Activated CD4-positive, alpha-beta T cell treated with anti-CD3 and anti-CD28 coated beads for 36 hours (primary cell): ENCODE measurements at regions of chr4 and their contacts with region 1.

Region 1: GRCh38 chr4:3880615-3881120 is 114.5 kb downstream of the ADRA2C start:
- DNase-seq: peak; percentile 87
- ATAC-seq: peak; percentile 85
- H3K4me3 Mint-ChIP-seq: no peak overlapping the region
- H3K27ac Mint-ChIP-seq: no peak overlapping the region
- H3K4me1 Mint-ChIP-seq: peaks cover 11% of the 10 kb centered on the region
- H3K27me3 Mint-ChIP-seq: peaks cover 29% of the 10 kb centered on the region

Region 2: GRCh38 chr4:3708103-3708510 is 172.6 kb before region 1 on chr4:
- CTCF ChIA-PET with region 1: no interaction called
- POLR2A ChIA-PET with region 1: no interaction called
- intact Hi-C with region 1: no loop called
- DNase-seq: no peak
- ATAC-seq: no peak
- H3K4me3 Mint-ChIP-seq: no peak overlapping the region
- H3K27ac Mint-ChIP-seq: no peak overlapping the region
- H3K4me1 Mint-ChIP-seq: no peaks in the 10 kb centered on the region
- H3K27me3 Mint-ChIP-seq: peaks cover 5% of the 10 kb centered on the region

Region 3: GRCh38 chr4:3747581-3747904 is 133.1 kb before region 1 on chr4:
- CTCF ChIA-PET with region 1: interaction called, 3 read pairs
- POLR2A ChIA-PET with region 1: no interaction called
- intact Hi-C with region 1: loop called in 1 of 2 experiments (anchors 1 kb)
- DNase-seq: peak; percentile 43
- ATAC-seq: no peak
- H3K4me3 Mint-ChIP-seq: no peak overlapping the region
- H3K27ac Mint-ChIP-seq: no peak overlapping the region
- H3K4me1 Mint-ChIP-seq: no peaks in the 10 kb centered on the region
- H3K27me3 Mint-ChIP-seq: peaks cover 40% of the 10 kb centered on the region

Region 4: DNA sequence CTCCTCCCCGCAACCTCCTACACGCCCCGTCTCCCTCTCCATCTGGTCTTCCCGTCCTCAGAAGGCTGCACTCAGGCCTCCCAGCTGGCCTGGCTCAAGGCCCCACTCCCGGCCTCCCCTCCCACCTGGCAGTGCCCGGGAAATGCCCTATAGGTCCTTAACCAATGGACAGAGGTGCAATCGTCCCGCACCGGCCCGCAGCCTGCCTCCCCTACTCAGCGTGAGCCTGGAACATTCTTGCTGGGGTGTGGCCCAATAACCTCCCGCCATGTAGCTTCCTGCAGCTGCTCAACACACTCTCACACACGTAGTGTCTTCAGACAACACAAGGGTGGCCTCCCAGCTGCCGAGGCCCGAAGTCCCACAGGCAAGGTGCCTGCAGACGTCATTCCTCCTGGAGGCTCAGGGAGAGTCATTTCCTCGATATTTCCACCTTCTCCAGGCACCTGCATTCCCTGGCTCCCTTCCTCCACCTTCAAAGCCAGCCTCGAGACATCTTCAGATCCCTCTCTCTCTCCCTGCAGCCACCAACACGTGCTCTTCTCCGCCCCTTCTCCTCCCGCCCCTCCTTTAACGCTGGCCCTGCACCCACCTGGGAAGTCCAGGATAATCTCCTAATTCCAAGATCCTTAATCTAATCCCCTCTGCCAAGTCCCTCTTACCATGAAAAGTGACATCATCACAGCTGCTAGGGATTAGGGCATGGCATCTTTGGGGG is 58.3 kb before region 1 on chr4:
- CTCF ChIA-PET with region 1: no interaction called
- POLR2A ChIA-PET with region 1: no interaction called
- intact Hi-C with region 1: no loop called
- DNase-seq: no peak
- ATAC-seq: no peak
- H3K4me3 Mint-ChIP-seq: no peak overlapping the region
- H3K27ac Mint-ChIP-seq: no peak overlapping the region
- H3K4me1 Mint-ChIP-seq: no peaks in the 10 kb centered on the region
- H3K27me3 Mint-ChIP-seq: peaks cover 2% of the 10 kb centered on the region